Endothelial cell of umbilical vein (primary cell): ENCODE measurements at regions of chr5 and their contacts with region 1.

Region 1: GRCh38 chr5:43305948-43306565 is 7.2 kb downstream of the HMGCS1 start:
- DNase-seq: peak; percentile 71
- H3K4me3 ChIP-seq: no peak overlapping the region
- H3K27ac ChIP-seq: no peak overlapping the region
- H3K4me1 ChIP-seq: peaks cover 19% of the 10 kb centered on the region
- H3K27me3 ChIP-seq: no peaks in the 10 kb centered on the region
- CTCF ChIP-seq: peak; percentile 39 to 43
- POLR2A ChIP-seq: no peak

Region 2: DNA sequence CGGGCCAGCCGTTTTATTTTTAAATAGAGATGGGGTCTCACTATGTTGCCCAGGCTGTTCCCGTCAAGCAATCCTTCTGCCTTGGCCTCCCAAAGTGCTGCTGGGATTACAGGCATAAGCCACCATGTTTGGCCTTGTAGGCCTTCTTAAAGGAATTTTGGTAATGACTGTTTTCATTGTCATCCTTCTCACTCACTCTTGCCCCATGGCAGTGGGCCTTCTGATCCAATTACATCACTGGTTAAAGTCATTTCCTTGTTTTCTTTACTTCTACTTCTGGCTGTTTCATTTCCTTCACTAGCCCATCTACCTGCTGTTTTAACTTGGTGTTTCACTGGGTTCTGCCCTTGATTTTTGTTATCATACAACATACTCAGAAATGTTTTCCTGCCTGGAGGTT is 134.1 kb before region 1 on chr5:
- CTCF ChIA-PET with region 1: no interaction called
- POLR2A ChIA-PET with region 1: no interaction called
- dilution Hi-C with region 1: no loop called
- intact Hi-C with region 1: no loop called
- DNase-seq: peak; percentile 15
- H3K4me3 ChIP-seq: no peak overlapping the region
- H3K27ac ChIP-seq: no peak overlapping the region
- H3K4me1 ChIP-seq: peaks cover 11% of the 10 kb centered on the region
- H3K27me3 ChIP-seq: no peaks in the 10 kb centered on the region
- CTCF ChIP-seq: no peak
- POLR2A ChIP-seq: no peak

Region 3: DNA sequence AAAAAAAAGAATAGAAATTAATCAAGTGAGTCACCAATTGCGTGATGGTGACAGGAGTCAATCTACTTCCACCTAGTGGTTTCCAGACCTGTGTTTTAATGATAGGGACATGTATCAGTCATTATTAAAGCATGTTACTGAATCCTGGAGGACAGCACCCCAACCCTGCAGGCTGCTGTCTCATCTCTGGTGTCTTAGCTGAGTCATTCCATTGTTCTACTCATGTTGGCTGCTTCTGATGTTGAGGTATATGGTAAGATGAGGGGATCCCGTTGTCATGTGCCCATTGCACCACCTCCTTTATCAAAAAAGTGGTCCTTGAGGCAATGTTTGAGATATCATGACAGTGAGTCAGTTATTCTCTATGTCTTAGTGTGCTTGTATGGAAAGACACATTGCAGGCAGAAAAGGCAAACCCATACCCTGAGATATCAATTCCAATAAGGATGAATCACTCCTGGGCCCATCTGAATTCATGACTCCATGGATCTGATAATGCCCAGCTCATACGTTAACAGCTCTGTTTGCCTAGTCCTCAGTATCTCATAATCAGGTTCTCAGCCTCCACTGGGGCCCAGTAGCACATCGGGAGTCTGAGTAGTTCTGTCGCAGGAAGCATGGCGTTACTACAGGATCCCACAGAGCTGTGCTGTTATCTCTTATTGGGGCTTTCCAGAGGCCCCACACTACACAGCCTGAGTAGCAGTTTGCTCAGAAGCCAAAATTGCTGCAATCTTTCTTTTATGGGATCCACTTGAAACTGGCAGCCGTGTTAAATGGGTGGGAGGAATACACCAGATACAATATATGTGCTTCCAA is 24.0 kb before region 1 on chr5:
- CTCF ChIA-PET with region 1: no interaction called
- POLR2A ChIA-PET with region 1: no interaction called
- dilution Hi-C with region 1: no loop called
- intact Hi-C with region 1: no loop called
- DNase-seq: no peak
- H3K4me3 ChIP-seq: no peak overlapping the region
- H3K27ac ChIP-seq: no peak overlapping the region
- H3K4me1 ChIP-seq: no peaks in the 10 kb centered on the region
- H3K27me3 ChIP-seq: no peaks in the 10 kb centered on the region
- CTCF ChIP-seq: no peak
- POLR2A ChIP-seq: no peak

Region 4: DNA sequence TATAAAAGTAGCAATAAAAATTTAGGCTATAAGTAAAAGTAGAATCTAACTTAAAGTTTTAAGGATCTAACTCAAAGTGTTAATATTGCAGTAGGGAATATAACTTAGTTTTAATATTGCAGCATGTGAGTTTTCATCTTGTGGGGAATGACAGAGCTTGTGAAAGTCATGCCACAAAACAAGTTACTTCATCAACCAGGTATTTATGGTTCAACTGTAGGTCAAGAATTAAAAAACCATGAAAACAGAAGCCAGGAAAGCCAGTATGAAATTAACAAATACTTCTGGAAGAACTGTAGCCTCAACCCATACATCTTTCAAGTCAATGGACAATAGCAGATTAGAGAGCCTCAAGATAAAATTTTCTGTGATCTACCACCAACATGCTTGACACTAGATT is 11.8 kb before region 1 on chr5:
- CTCF ChIA-PET with region 1: interaction called, 12 read pairs
- POLR2A ChIA-PET with region 1: no interaction called
- dilution Hi-C with region 1: no loop called
- intact Hi-C with region 1: no loop called
- DNase-seq: peak; percentile 14
- H3K4me3 ChIP-seq: no peak overlapping the region
- H3K27ac ChIP-seq: no peak overlapping the region
- H3K4me1 ChIP-seq: no peaks in the 10 kb centered on the region
- H3K27me3 ChIP-seq: no peaks in the 10 kb centered on the region
- CTCF ChIP-seq: no peak
- POLR2A ChIP-seq: no peak

Region 5: GRCh38 chr5:43320846-43321245 is 14.8 kb after region 1 on chr5:
- CTCF ChIA-PET with region 1: no interaction called
- POLR2A ChIA-PET with region 1: no interaction called
- dilution Hi-C with region 1: no loop called
- intact Hi-C with region 1: no loop called
- DNase-seq: no peak
- H3K4me3 ChIP-seq: no peak overlapping the region
- H3K27ac ChIP-seq: no peak overlapping the region
- H3K4me1 ChIP-seq: no peaks in the 10 kb centered on the region
- H3K27me3 ChIP-seq: peaks cover 0 to 5% of the 10 kb centered on the region in 2 experiments
- CTCF ChIP-seq: no peak
- POLR2A ChIP-seq: no peak

Region 6: GRCh38 chr5:43685252-43685950 is 379.3 kb after region 1 on chr5:
- CTCF ChIA-PET with region 1: no interaction called
- POLR2A ChIA-PET with region 1: no interaction called
- dilution Hi-C with region 1: no loop called
- intact Hi-C with region 1: no loop called
- DNase-seq: no peak
- H3K4me3 ChIP-seq: no peak overlapping the region
- H3K27ac ChIP-seq: no peak overlapping the region
- H3K4me1 ChIP-seq: no peaks in the 10 kb centered on the region
- H3K27me3 ChIP-seq: no peaks in the 10 kb centered on the region
- CTCF ChIP-seq: no peak
- POLR2A ChIP-seq: no peak